Heart right ventricle (tissue), 16 donors: ENCODE measurements at regions of chr2 and their contacts with region 1.

Region 1: DNA sequence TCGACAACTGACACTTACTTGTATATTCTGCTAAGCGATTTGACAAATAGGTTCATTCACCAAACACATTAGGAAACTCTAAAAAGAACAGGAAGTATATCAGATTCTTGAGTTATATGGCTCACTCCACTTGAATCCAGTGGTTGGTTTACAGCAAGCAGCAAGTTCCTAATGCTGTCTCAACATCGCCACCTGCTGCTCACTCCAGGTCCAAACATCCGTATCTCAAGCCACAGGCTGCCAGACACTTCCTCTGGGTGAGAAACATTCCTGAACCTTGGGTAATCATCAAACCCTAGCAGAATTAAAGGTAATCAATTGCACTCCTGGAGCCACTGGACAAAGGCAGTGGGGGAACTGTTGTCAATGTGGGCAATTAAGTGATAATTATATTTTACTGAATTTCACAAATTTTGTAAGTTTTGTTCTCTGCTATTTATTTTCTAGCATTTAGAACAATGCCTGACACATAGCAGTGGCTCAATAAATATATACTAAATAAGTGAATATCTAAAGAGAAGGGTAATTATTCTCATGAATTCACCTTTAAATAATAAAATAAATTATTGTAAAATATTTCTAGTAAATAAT is 107.1 kb upstream of the TTN start:
- DNase-seq: peak; percentile 79 to 84
- ATAC-seq: peak; percentile 68 to 94 (median 82)
- H3K4me3 ChIP-seq: no peak overlapping the region
- H3K27ac ChIP-seq: no peak overlapping the region
- H3K4me1 ChIP-seq: peaks cover 0 to 25% (median 7%) of the 10 kb centered on the region in 9 donors
- H3K27me3 ChIP-seq: no peaks in the 10 kb centered on the region
- CTCF ChIP-seq: peak; percentile 67 to 93 (median 91)

Region 2: DNA sequence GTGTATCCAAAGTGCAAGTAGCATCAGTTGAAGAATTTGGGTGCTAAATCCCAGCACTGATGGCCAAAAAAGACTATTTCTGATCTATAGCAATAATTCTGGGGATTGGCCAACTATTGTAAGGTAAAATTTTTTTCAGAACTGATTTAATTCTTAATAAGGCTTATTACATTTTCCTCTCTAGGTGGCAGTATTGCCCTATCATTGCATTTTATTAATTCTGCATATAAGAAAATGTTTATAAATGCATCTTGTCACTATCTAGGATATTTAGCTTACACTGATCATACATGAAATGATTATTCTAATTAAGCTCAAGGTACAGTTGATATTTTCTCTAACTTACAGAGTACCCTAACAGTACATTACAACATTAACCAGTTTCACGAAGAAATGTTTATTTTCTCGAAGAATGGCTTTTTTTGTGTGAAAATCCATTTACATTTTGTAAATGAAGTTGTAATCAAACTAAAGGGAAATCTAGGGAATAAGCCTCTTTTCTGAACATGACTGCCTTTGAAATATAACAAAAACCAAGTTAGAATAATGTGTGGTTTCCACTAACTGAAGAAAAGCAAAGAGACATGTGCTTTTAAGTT is 118.2 kb before region 1 on chr2:
- intact Hi-C with region 1: loop called (anchors 1 to 10 kb)
- DNase-seq: no peak
- ATAC-seq: no peak
- H3K4me3 ChIP-seq: no peak overlapping the region
- H3K27ac ChIP-seq: no peak overlapping the region
- H3K4me1 ChIP-seq: peaks cover 0 to 52% (median 8%) of the 10 kb centered on the region in 9 donors
- H3K27me3 ChIP-seq: no peaks in the 10 kb centered on the region
- CTCF ChIP-seq: peak; percentile 51 to 82 (median 66)

Region 3: DNA sequence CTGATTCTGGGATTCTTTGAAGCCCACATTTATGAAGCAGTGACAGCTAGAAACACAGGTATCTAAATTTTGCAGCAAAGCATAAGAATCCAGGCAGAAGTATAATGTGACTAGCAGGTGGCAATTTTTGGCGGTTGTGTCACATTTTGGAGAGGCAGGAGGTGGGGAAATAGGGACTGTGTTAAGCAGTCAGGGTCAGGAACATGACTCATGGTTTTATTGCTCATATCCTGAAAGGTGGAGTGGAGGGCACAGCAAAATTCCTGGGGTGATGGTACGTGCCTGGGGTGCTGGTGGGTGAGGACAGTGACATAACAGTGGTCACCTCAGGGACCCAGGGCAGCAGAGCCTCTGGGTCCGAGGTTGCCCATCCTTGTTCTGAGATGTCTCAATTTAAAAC is 43.7 kb before region 1 on chr2:
- intact Hi-C with region 1: loop called in 1 of 10 experiments (anchors 5 kb)
- DNase-seq: no peak
- ATAC-seq: peak in 6 of 8 donors; percentile 34 to 76 (median 54)
- H3K4me3 ChIP-seq: no peak overlapping the region
- H3K27ac ChIP-seq: peak overlapping the region in 8 of 10 donors; percentile 11 to 84 (median 64)
- H3K4me1 ChIP-seq: peaks cover 0 to 51% (median 25%) of the 10 kb centered on the region in 9 donors
- H3K27me3 ChIP-seq: no peaks in the 10 kb centered on the region
- CTCF ChIP-seq: no peak